Pancreas (tissue), 10 donors: ENCODE measurements at regions of chr22 and their contacts with region 1.

Region 1: DNA sequence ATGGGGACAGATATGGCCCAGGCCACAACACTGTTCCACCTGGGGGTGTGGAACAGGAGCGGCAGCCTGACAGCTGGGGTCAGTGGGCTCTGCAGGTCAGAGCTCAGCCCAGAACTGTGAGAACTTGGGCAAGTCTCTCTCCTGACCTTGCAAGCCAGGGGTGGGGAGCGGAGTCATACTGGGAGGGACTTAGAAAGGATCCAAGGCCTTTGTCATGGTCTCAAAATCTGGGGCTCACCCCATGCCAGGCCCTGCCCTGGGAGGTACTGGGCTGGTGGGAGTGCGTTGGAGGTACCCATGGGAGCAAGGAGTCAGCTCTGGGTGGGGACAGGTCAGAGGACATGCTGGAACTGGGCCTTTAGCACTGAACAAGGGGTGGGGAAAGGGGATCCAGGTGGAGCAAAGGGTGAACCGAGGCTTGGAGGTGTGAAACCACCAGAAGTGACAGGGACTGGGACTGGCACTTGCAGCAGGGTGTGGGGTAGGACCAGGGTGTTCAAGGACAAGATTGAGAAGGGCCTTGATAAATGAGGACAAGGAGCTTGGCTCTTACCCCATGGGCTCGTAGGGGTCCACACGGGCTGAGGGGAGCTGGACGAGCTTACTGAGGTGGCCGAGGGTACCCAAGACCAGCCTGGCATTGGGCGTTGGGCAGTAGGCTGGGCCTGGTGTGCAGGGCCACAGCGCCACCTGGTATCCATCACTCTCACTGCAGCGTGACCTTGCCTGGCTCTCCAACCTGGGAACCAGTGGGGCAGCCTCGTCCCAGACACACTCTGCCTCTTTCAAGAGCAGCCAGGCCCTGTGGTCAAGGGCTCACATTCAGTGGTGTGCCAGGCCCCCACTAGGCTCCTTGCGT is 7.4 kb upstream of the PMM1 start:
- DNase-seq: peak; percentile 47 to 89 (median 80)
- ATAC-seq: peak; percentile 94 to 100 (median 96)
- H3K4me3 ChIP-seq: no peak overlapping the region
- H3K27ac ChIP-seq: no peak overlapping the region
- H3K4me1 ChIP-seq: no peaks in the 10 kb centered on the region
- H3K27me3 ChIP-seq: no peaks in the 10 kb centered on the region
- CTCF ChIP-seq: peak; percentile 47 to 71 (median 65)

Region 2: GRCh38 chr22:41479671-41480396 is 117.2 kb before region 1 on chr22:
- intact Hi-C with region 1: no loop called
- DNase-seq: no peak
- ATAC-seq: peak in 2 of 4 donors; percentile 26 to 41
- H3K4me3 ChIP-seq: no peak overlapping the region
- H3K27ac ChIP-seq: no peak overlapping the region
- H3K4me1 ChIP-seq: peaks cover 0 to 5% (median 0%) of the 10 kb centered on the region in 3 donors
- H3K27me3 ChIP-seq: no peaks in the 10 kb centered on the region
- CTCF ChIP-seq: no peak

Region 3: DNA sequence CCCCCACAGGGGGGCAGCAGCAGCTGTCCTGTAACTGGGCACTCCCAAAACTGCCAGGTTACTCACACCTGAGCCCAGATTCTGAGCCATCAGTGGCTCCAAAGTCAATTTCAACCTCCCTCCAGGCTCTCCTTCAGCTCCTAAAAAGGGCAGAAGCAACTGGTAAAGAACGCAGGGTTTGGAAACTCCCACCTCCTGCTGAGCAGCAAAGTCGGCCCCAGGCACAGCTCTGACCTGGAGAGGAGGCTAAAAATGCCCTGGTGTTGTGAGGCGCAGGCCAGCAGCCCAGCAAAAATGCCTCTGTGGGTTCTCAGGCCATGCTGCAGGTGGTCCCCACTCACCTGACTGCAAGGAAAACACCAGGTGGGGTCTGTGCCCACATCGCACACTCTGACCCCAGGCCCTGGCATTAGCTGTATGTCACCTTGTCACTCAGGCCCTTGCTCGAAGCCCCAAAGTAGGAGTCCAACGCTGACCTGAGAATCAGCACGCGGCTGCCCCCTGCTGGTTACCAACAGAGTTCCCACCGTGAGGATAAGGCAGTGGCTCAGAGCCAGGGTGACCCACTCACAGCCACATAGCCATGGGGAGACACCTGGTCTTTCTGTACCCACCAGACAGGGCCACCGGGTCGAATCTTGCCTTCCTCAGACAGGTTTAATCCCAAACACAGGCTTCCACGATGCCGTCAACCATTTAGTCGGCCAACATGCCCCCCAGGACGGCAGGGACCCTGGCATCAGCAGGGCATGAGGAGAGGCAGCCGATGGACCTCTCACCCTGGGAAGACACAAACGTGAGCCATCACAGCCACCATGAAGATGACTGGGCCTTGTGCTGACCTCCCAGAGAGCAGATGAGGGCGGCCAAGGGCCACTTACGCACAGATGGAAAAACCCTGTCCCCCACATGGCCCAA is 63.8 kb before region 1 on chr22:
- intact Hi-C with region 1: loop called in 1 of 3 experiments (anchors 5 kb)
- DNase-seq: peak; percentile 58 to 88 (median 80)
- ATAC-seq: peak; percentile 70 to 82 (median 76)
- H3K4me3 ChIP-seq: no peak overlapping the region
- H3K27ac ChIP-seq: no peak overlapping the region
- H3K4me1 ChIP-seq: no peaks in the 10 kb centered on the region
- H3K27me3 ChIP-seq: no peaks in the 10 kb centered on the region
- CTCF ChIP-seq: peak; percentile 66 to 76 (median 72)

Region 4: GRCh38 chr22:41656556-41656955 is 59.6 kb after region 1 on chr22:
- intact Hi-C with region 1: no loop called
- DNase-seq: peak in 1 of 6 donors; percentile 2
- ATAC-seq: no peak
- H3K4me3 ChIP-seq: no peak overlapping the region
- H3K27ac ChIP-seq: no peak overlapping the region
- H3K4me1 ChIP-seq: no peaks in the 10 kb centered on the region
- H3K27me3 ChIP-seq: no peaks in the 10 kb centered on the region
- CTCF ChIP-seq: no peak

Region 5: DNA sequence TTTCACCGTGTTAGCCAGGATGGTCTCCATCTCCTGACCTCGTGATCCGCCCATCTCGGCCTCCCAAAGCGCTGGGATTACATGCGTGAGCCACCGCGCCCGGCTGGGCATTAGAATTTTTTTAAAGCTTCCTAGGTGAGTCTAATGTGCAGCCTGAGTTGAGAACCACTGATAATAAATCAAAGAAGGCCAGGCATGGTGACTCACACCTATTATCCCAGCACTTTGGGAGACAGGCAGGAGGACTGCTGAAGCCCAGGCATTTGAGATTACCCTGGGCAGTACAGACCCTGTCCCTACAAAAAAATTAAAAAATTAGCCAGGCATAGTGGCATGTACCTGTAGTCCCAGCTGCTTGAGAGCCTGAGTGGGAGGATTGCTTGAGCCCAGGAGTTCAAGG is 116.0 kb after region 1 on chr22:
- intact Hi-C with region 1: no loop called
- DNase-seq: no peak
- ATAC-seq: no peak
- H3K4me3 ChIP-seq: no peak overlapping the region
- H3K27ac ChIP-seq: no peak overlapping the region
- H3K4me1 ChIP-seq: no peaks in the 10 kb centered on the region
- H3K27me3 ChIP-seq: no peaks in the 10 kb centered on the region
- CTCF ChIP-seq: no peak